ENCODE measurements at regions of chr5 and their contacts with region 1.

Region 1: GRCh38 chr5:16539169-16539721 is 73.6 kb upstream of the ZNF622 start:
- DNase-seq: peak; percentile 82

Region 2: DNA sequence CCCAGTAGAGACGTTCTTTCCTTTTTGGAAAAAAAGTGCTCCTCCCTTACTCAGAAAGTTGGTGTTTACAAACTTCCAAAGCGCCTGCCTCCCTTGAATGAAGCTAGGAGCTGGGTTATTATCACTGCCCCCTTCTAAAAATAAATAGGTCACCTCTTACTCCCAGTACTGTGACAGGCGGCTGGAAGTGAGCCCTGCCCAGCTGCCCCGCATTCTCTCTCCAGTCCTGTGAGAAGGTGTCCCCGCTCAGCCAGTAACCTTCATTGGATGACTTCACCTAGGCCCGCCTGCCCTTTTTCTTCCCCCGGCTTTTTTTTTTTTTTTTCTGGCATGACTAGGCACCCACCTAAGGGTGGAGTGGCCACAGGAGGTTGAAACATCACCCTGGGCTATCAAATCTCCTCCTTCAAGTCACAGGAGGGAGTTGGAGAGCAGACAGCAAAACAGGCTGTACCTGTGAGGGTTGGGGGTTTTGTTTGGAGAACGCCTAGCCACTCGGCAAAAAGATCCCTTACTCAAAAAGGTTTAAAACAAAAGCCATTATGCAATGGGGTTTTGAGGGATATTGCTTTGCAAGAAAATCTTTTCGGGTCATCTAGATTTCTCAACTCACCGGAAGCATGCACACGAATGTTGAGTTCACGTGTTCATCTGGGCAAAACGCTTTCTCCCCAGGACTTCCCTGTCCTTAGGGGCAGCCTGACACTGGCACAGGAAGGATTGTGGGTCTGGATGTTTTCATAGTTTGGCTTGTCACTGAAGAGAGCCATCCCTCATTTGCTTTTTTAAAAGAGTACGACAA is 30.3 kb before region 1 on chr5:
- intact Hi-C with region 1: loop called (anchors 1 kb)
- DNase-seq: peak; percentile 86